ENCODE measurements at regions of chr2 and their contacts with region 1.

Region 1: GRCh38 chr2:60881047-60881932 is at the start of gene REL:
- DNase-seq: peak; percentile 94
- H3K4me3 Mint-ChIP-seq: peak within 1 kb of the TSS; percentile 100
- H3K27ac Mint-ChIP-seq: peak within 1 kb of the TSS; percentile 96
- H3K4me1 Mint-ChIP-seq: peaks cover 27% of the 10 kb centered on the region
- H3K27me3 Mint-ChIP-seq: no peaks in the 10 kb centered on the region
- total RNA-seq, gene REL: 37.1 to 38.1 TPM

Region 2: GRCh38 chr2:60806988-60807681 is 74.2 kb before region 1 on chr2:
- CTCF ChIA-PET with region 1: interaction called, 16 read pairs
- POLR2A ChIA-PET with region 1: interaction called, 28 read pairs
- intact Hi-C with region 1: loop called (anchors 1 kb)
- DNase-seq: peak; percentile 81
- H3K4me3 Mint-ChIP-seq: peak overlapping the region; percentile 36
- H3K27ac Mint-ChIP-seq: peak overlapping the region; percentile 88
- H3K4me1 Mint-ChIP-seq: peaks cover 49% of the 10 kb centered on the region
- H3K27me3 Mint-ChIP-seq: no peaks in the 10 kb centered on the region

Region 3: DNA sequence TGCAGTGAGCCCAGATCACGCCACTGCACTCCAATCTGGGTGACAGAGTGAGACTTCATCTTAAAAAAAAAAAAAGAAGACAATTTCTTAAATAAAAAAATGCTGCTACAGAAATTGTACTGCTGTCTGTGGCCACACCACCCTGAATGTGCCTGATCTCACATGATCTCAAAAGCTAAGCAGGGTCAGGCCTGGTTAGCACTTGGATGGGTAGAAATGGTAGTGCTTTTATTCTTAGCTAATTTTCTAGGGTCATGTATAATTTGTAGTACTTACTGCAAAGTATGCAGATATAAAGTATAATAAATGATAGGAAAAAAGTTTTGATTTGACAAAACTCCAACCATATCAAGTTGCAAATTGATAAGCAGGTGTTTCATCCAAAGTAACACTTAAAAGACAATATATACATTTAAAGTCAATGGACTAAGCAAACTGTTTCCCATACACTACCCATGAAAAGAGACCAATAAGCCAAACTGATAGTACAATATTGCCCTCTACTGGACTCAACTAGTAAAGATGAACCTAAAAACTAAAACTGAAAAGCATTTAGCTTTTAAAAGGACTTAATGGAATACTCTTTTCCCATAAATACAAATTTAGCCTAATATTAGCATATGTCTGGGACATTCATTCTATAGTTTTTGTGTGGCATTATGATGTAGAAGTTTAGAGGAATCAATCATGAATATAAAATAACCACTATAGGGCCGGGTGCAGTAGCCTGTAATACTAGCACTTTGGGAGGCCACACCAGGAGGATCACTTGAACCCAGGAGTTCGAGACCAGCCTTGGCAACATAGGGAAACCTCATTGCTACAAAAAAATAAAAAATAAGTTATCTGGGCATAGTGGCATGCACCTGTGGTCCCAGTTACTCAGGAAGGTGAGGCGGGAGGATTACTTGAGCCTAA is 117.6 kb after region 1 on chr2:
- CTCF ChIA-PET with region 1: interaction called, 13 read pairs
- POLR2A ChIA-PET with region 1: interaction called, 3 read pairs
- intact Hi-C with region 1: no loop called
- DNase-seq: no peak
- H3K4me3 Mint-ChIP-seq: no peak overlapping the region
- H3K27ac Mint-ChIP-seq: no peak overlapping the region
- H3K4me1 Mint-ChIP-seq: no peaks in the 10 kb centered on the region
- H3K27me3 Mint-ChIP-seq: no peaks in the 10 kb centered on the region

Region 4: DNA sequence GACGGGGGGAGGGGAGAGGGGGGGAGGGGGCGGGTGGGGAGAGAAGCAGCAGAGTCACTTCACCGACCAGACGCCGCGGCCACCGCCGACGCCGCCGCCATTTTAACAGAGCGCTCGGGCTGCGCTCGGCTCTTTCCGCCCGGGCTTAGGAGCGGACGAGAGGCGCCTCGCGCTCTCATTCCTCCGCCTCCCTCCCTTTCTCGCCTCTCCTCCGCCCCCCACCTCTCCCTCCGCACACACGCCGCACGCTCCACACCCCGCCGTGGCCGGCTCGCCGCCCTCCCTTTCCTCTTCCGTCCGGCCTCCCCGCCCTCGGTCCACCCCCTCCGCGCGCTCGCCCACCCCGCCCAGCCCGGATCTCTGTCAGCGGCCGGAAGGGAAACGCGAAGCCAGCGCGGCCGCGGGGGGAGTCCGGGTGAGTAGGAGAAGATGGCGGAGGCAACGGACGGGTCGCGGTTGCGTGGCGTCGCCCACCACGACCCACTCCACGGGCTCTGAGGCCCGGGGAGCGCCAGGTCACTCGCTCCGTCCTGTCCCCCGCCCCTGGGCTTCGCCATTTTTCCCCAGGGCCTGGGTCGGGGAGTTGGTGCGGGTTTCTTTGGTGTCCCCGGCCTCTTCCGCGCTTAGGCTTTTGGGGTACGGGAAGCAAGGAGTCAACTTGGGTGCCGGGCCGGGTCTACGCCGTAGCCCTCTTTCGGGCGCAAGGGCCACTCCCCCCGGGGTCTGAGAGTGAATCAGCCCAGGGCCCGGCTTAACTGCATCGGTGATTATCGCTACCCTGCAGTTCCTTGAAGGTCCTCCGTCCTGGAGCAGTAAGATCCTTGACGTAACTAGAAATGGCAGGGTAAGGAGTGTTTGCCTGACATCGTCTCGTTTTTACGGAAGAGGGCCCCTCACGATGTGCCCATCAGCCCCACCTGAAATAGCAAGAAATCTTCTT is 589.9 kb after region 1 on chr2 and contains the start of gene USP34:
- CTCF ChIA-PET with region 1: no interaction called
- POLR2A ChIA-PET with region 1: no interaction called
- intact Hi-C with region 1: loop called (anchors 5 kb)
- DNase-seq: peak; percentile 95
- H3K4me3 Mint-ChIP-seq: peak within 1 kb of the TSS; percentile 93
- H3K27ac Mint-ChIP-seq: peak within 1 kb of the TSS; percentile 94
- H3K4me1 Mint-ChIP-seq: peaks cover 27% of the 10 kb centered on the region
- H3K27me3 Mint-ChIP-seq: no peaks in the 10 kb centered on the region
- total RNA-seq, gene USP34: 61.1 to 69.4 TPM

Measured in activated CD4-positive, alpha-beta memory T cell treated with anti-CD3 and anti-CD28 coated beads for 36 hours (primary cell).